ENCODE measurements at regions of chr19 and their contacts with region 1.

Region 1: DNA sequence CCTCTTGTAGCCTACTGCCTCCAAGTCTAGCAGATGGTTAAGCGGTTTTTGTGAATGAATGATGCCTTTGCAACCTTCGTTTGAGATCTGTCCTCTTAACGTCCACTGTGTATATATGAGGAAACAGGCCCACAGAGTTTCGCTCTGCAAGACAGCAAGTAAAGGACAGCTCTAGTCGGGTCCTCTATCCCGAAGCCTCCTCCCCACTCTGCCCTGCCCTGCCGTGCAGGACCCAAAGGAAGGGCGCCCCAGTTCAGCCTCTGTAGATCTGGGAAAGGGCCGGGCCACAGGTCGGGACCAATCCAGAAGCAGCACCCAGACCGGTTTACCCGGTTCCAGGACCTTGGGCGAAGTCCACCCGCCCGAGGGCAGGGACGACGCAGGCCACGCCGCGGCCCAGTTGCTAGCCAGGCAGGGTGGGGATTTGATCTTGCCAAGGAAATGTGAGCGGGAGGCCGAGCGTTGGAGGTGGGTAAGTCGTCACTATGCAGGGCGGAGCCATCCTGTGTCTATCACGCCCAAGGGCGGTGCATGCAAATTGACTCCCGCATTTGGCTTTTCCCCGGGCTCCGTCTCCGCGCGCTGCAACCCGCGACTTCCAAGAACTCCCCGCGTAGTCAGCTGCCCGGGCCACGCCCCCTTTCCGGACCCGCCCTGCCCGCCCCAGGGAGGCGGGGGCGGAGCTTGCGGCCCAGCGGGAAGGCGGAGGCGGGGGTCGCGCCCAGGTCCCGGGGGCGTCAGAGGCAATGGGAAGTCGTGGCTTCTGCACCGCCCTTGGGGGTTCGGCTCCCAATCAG is 12.5 kb downstream of the IER2 start:
- DNase-seq: peak; percentile 74 to 87 (median 79)
- H3K4me3 ChIP-seq: peak overlapping the region; percentile 82
- H3K4me3 Mint-ChIP-seq: peak overlapping the region; percentile 85 to 91 (median 89)
- H3K27ac ChIP-seq: peak overlapping the region; percentile 92
- H3K27ac Mint-ChIP-seq: peak overlapping the region; percentile 94 to 99 (median 97)
- H3K4me1 ChIP-seq: peaks cover 84% of the 10 kb centered on the region
- H3K4me1 Mint-ChIP-seq: peaks cover 53 to 87% (median 82%) of the 10 kb centered on the region in 3 donors
- H3K27me3 ChIP-seq: no peaks in the 10 kb centered on the region
- H3K27me3 Mint-ChIP-seq: peaks cover 0 to 6% of the 10 kb centered on the region in 2 donors

Region 2: GRCh38 chr19:13109361-13110098 is 53.2 kb before region 1 on chr19:
- CTCF ChIA-PET with region 1: no interaction called
- POLR2A ChIA-PET with region 1: no interaction called
- DNase-seq: no peak
- H3K4me3 ChIP-seq: no peak overlapping the region
- H3K4me3 Mint-ChIP-seq: no peak overlapping the region
- H3K27ac ChIP-seq: no peak overlapping the region
- H3K27ac Mint-ChIP-seq: no peak overlapping the region
- H3K4me1 ChIP-seq: peaks cover 7% of the 10 kb centered on the region
- H3K4me1 Mint-ChIP-seq: peaks cover 0 to 9% (median 2%) of the 10 kb centered on the region in 3 donors
- H3K27me3 ChIP-seq: no peaks in the 10 kb centered on the region
- H3K27me3 Mint-ChIP-seq: no peaks in the 10 kb centered on the region

Region 3: DNA sequence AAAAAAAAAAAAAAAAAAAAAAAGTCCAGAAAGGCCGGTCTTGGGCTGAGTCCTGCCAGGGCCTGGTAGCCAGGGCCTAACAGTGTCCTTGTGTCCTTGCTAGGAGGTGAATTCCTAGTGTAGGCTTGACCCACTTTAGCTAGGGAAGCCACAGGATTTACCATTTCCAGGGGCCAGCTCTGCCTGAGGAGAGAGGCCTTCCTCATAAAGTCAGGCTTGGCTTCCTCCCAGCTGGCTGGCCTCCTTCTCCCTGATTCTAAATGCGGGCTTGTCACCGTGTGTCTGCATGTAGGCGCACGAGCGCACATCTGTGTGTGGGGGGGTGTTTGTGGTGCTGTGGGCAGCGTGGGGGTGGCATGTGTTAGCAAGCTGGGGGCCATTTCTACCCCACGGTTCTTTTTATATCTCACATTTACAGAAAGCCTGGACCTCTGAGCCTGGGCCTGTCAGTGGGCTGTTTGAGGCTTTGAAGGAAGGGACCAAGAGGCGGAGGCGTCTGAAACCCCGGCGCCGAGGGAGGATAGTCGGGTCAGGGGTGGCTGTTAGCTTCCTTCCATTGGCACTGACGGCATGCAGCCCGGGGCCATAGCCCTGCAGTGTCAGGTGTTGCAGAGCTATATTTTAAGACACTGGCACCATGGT is 19.2 kb after region 1 on chr19:
- CTCF ChIA-PET with region 1: interaction called, 11 read pairs
- POLR2A ChIA-PET with region 1: interaction called, 17 read pairs
- DNase-seq: peak; percentile 19 to 70 (median 35)
- H3K4me3 ChIP-seq: peak overlapping the region; percentile 41
- H3K4me3 Mint-ChIP-seq: peak overlapping the region in 6 of 7 donors; percentile 68 to 89 (median 71)
- H3K27ac ChIP-seq: no peak overlapping the region
- H3K27ac Mint-ChIP-seq: peak overlapping the region; percentile 83 to 97 (median 90)
- H3K4me1 ChIP-seq: peaks cover 26% of the 10 kb centered on the region
- H3K4me1 Mint-ChIP-seq: peaks cover 22 to 41% (median 23%) of the 10 kb centered on the region in 3 donors
- H3K27me3 ChIP-seq: no peaks in the 10 kb centered on the region
- H3K27me3 Mint-ChIP-seq: no peaks in the 10 kb centered on the region

Measured in CD8-positive, alpha-beta memory T cell (primary cell).